Ascending aorta (tissue), 2 donors: ENCODE measurements at regions of chr17 and their contacts with region 1.

Region 1: DNA sequence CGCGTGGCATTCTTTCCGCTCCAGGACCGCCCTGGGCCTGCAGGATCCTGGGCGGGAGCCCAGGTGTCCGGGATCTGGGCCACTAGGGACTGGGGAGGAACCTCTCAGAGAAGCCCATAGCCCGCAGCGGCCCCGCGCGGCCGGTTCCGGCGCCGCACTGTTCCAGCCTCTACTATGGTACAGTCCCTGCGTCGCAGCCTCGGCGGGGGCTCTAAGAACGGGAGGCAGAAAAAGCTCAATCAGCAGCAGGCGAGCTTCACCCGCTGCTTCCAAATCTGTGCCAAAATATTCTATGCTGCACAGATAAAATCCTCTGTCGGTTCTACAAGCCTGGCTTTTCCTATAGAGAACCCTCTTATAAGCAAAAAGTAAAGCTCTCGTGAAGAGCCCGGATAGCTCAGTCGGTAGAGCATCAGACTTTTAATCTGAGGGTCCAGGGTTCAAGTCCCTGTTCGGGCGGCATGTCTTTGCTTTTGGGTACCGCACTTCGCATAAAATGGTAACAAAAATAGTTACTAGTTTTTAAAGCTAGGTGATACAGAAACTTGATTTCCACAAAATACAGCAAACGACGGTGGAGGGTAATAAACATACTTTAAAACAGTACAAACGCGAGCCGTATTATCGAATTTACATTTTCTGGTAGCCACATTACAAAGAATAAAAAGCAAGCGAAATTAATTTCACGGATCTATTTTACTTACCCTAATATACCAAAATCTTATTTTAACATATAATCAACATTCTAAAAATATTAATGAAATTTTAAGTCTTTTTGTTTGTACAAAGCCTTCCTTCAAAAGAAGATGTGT is 661 bp upstream of the ALOXE3 start:
- DNase-seq: peak; percentile 63 to 95
- H3K4me3 ChIP-seq: peak overlapping the region; percentile 53 to 65
- H3K27ac ChIP-seq: peak overlapping the region; percentile 37 to 70
- H3K4me1 ChIP-seq: peaks cover 21 to 44% of the 10 kb centered on the region in 2 donors
- H3K27me3 ChIP-seq: no peaks in the 10 kb centered on the region
- CTCF ChIP-seq: peak; percentile 91 to 97 (median 92)

Region 2: DNA sequence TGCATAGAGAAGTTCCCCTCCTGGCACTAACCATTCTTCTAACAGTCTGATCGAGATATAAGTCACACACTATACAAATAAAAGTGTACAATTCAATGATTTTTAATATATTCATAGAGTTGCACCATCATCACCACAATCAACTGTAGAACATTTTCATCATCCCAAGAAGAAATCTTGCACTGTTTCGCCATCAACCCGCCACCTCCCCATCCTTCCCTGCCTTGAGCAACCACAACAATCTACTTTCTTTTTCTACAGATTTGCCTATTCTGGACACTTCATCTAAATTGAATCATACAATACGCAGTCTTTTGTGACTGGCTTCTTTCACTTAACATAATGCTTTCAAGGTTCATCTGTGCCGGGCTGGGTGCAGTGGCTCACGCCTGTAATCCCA is 149.5 kb before region 1 on chr17:
- intact Hi-C with region 1: no loop called
- DNase-seq: no peak
- H3K4me3 ChIP-seq: no peak overlapping the region
- H3K27ac ChIP-seq: no peak overlapping the region
- H3K4me1 ChIP-seq: no peaks in the 10 kb centered on the region
- H3K27me3 ChIP-seq: no peaks in the 10 kb centered on the region
- CTCF ChIP-seq: no peak

Region 3: GRCh38 chr17:8041249-8041928 is 77.6 kb before region 1 on chr17:
- intact Hi-C with region 1: no loop called
- DNase-seq: no peak
- H3K4me3 ChIP-seq: no peak overlapping the region
- H3K27ac ChIP-seq: peak overlapping the region in 1 of 2 donors; percentile 15
- H3K4me1 ChIP-seq: no peaks in the 10 kb centered on the region
- H3K27me3 ChIP-seq: peaks cover 10% of the 10 kb centered on the region
- CTCF ChIP-seq: peak in 2 of 3 experiments; percentile 27 to 38

Region 4: DNA sequence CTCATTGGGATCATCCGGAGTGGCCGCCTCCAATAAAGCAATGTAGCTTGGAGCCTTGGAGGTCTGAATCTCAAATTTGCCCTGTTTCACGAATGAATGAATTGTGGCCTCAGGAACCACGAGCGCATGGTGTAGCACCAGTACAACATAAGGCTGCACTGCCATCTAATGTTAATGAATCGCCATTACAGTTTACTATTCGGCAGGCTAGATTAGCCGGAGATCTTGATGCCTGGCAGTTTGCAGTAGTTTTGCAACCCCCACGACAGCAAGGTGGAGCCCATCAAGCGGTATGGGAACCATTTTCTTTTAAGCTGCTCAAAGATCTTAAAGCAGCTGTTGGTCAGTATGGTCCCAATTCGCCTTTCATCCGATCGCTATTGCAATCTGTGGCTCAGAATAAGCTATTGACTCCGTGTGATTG is 61.3 kb before region 1 on chr17:
- intact Hi-C with region 1: no loop called
- DNase-seq: peak in 1 of 2 donors; percentile 74
- H3K4me3 ChIP-seq: no peak overlapping the region
- H3K27ac ChIP-seq: no peak overlapping the region
- H3K4me1 ChIP-seq: peaks cover 0 to 3% of the 10 kb centered on the region in 2 donors
- H3K27me3 ChIP-seq: peaks cover 8% of the 10 kb centered on the region
- CTCF ChIP-seq: peak; percentile 69 to 78 (median 74)

Region 5: DNA sequence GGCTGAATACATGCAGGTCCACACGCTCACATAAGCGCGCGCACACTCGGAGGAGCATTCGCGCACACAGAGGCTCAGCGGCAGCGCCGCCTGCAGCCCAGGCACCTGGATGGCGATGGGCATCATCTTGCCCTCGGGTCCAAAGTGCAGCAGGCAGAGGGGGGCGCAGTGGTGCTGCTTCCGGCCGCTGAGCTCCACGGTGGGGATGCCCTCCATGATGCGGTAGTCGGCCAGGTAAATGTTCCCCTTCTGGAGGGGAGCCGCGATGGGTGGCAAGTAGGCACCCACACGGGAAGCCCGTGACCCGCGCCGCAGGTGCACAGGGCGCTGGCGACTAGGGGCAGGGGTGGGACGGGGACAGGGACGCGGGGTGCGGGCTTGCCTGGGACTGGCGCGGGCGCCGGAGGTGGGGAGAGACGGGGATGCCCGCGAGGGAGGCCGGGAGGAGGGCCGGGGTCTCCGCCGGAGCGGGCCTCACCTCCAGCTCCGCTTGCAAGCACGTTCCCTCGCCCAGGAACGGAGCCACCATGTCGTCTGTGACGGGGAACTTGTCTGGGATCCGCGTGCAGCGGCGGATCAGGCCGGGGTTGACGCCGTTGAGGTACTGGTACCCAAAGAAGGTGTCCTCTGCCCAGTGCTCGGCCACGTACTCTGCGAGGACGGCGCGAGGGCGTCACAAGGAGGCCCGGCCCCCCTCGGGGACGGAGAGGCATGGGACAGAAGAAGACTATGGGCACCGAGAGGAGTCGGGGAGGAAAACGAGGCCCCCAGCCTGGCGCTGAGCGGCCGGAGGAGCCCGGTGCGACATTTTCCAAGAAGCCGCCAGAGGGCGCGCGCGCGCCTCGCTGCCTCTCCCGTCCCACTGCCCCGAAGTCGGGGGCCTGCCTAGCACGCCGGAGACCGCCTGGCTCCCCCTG is 39.4 kb before region 1 on chr17:
- intact Hi-C with region 1: loop called (anchors 5 kb)
- DNase-seq: peak in 1 of 2 donors; percentile 75
- H3K4me3 ChIP-seq: peak overlapping the region; percentile 43 to 60
- H3K27ac ChIP-seq: no peak overlapping the region
- H3K4me1 ChIP-seq: peaks cover 0 to 11% of the 10 kb centered on the region in 2 donors
- H3K27me3 ChIP-seq: no peaks in the 10 kb centered on the region
- CTCF ChIP-seq: peak; percentile 70 to 94 (median 93)

Region 6: GRCh38 chr17:8138672-8139371 is 19.8 kb after region 1 on chr17:
- intact Hi-C with region 1: loop called (anchors 1 kb)
- DNase-seq: peak; percentile 86 to 98
- H3K4me3 ChIP-seq: peak overlapping the region; percentile 11 to 36
- H3K27ac ChIP-seq: peak overlapping the region; percentile 77
- H3K4me1 ChIP-seq: peaks cover 4 to 16% of the 10 kb centered on the region in 2 donors
- H3K27me3 ChIP-seq: no peaks in the 10 kb centered on the region
- CTCF ChIP-seq: peak; percentile 82 to 91 (median 87)

Region 7: GRCh38 chr17:8189711-8190477 is 70.9 kb after region 1 on chr17 and contains the start of gene BORCS6:
- intact Hi-C with region 1: loop called (anchors 1 kb)
- DNase-seq: peak; percentile 97 to 99
- H3K4me3 ChIP-seq: peak within 1 kb of the TSS; percentile 69 to 81
- H3K27ac ChIP-seq: peak within 1 kb of the TSS; percentile 96 to 97
- H3K4me1 ChIP-seq: peaks cover 14 to 28% of the 10 kb centered on the region in 2 donors
- H3K27me3 ChIP-seq: no peaks in the 10 kb centered on the region
- CTCF ChIP-seq: peak in 1 of 3 experiments; percentile 6
- total RNA-seq, gene BORCS6: 29.5 TPM

Region 8: DNA sequence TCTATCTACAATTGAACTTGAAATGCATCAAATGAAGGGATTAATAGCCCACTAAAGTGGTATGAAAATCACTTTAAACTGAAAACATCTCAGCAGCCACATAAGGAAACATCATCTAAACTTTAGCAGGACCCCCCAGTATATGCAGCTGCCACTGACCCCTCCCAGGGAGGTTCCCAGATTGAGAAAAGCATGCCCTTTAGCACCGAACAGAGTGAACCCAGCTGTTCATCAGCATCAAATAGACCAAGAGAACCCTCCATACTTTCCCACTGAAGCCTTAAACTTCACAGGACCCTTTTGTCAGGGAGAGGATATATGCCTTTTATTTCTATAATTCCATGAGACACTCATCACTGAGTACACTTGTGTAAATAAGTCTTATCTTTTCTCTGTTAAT is 466.9 kb after region 1 on chr17:
- intact Hi-C with region 1: no loop called
- DNase-seq: no peak
- H3K4me3 ChIP-seq: no peak overlapping the region
- H3K27ac ChIP-seq: peak overlapping the region; percentile 57 to 83
- H3K4me1 ChIP-seq: peaks cover 7 to 73% of the 10 kb centered on the region in 2 donors
- H3K27me3 ChIP-seq: no peaks in the 10 kb centered on the region
- CTCF ChIP-seq: no peak